ENCODE measurements at regions of chr11 and their contacts with region 1.

Region 1: DNA sequence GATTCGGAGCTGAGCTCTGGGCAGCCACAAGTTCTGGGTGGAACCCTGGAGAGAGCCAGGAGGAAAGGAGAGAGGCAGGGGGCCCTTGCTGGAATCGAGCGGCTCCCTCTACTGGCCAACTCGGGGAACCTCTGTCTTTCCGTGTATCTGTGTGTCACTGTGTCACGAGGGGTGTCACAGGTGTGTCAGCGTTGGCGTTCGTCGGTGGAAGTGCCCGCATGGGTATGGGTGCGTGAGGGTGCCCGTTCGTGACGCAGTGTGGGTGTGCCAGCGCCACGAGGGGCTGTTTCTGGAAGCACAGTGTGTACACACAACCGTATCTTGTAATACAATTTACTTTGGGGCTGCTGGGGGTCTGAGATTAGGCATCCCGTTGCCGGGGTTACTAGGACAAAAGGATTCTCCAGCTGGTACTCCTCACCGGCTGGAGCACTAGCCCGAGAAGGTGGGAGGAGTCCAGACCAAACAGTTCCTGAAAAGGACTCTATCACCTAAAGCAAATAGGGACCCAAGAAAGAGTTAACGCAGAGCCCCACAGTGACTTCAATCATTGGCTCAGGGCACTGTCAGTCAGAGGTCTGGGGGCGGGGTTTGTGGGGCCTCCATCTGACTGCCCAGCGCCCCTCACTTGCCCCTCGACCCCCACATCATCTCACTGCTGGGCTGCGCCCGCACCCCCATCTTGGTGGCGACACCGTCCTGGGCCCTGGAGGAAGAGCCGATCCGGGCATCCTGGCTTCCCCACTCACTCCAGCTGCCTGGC is 2.6 kb upstream of the BCL9L start:
- DNase-seq: peak; percentile 93

Region 2: DNA sequence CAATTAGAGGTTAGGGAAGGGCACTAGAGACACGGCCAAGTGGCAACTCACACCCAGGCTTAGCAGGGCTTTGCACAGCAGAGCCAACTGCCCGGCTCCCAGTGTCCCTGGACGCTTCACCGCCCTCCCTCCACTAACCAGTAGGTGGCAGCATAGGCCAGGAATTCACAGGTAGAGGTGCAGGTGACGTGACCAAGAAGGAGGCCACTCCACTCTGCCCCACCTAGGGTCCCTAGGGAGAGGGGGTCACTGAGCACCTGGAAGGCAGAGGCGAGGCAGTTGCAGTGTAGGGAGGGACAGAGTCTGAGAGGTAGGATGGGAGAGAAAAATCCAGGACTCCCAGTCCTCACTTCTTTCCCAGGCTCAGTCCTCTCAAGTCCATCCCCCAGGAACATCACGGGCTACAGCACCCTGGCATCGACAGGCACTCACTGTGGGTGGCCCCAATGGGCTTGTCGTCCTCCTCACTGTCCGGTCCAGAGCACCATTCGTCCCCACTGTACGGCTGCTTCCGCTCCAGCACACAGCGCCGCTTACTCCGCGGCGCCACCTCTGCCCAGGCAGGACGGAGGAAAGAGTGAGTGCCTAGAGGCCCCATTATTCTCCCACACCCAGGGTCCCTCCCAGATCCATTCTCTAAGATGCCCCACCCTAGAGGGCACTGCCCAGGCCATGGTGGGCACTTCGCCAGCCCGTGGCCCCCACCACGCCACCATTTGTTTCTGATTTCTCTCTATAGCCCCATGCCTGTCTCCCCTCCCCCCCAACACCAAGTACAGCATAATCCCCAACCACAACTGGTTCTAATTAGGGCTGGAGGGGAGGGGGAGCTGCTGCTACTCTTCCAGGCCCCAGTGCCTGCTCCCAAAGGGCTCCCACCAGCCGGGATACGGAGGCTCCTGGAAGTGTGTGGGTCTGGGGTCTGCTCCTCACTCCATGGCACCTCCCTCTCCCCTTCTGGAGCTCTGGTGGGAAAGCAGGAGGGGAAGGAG is 20.9 kb before region 1 on chr11:
- CTCF ChIA-PET with region 1: interaction called, 19 read pairs
- POLR2A ChIA-PET with region 1: interaction called, 50 read pairs
- DNase-seq: peak; percentile 86